ENCODE measurements at regions of chr1 and their contacts with region 1.

Region 1: DNA sequence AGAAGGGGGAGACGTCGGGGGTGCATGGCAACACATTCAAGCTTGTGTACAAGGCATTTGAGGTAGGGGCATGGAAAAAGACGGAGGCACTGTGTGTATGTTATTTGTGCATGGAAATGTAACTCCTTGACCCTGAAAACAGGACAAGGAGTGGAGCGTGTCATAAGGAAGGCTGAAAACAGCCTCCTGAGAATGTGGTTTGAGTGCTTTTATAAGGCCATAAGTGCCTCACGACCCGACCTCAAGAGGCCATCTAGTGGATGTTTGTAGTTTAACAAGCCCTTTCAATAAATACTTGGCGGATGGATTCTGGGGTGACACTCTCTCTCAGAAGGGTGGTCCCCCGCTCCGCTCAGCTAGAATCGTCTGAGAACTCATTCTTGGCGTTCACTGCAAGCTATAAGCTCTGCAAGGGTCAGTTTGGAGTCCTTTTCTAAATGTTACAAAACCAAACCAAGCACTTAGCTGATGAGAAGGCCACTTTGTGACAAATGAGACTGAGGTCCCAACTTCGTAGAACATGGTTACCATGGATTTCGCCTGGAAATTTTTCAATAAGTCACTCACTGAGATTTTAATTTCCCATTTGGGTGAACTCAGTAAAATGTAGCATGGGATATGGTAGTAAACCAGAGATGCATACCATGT is 38.8 kb upstream of the CLCA4 start:
- DNase-seq: no peak
- ATAC-seq: no peak

Region 2: DNA sequence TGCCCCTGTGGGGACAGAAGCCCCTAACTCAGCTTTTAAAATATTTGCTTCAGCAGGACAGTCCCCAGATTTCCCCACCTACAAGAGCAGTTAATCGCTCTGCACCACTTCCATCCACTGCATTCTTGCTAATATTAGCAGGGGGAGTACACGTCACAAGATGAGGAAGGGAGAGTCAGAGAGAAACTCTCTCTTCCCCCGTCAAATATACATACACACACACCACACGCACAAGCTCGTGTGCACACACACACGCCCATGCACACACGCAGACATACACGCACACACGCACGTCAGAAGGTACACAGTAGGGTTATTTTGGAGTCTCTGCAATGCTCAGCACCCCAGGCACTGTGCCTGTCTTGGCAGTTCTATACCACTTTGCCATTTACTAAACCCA is 37.2 kb before region 1 on chr1:
- intact Hi-C with region 1: loop called (anchors 5 kb)
- DNase-seq: no peak
- ATAC-seq: no peak

Region 3: GRCh38 chr1:86852782-86853408 is 344.8 kb after region 1 on chr1:
- intact Hi-C with region 1: no loop called
- DNase-seq: no peak
- ATAC-seq: no peak